Endothelial cell of umbilical vein (primary cell): ENCODE measurements at regions of chr12 and their contacts with region 1.

Region 1: DNA sequence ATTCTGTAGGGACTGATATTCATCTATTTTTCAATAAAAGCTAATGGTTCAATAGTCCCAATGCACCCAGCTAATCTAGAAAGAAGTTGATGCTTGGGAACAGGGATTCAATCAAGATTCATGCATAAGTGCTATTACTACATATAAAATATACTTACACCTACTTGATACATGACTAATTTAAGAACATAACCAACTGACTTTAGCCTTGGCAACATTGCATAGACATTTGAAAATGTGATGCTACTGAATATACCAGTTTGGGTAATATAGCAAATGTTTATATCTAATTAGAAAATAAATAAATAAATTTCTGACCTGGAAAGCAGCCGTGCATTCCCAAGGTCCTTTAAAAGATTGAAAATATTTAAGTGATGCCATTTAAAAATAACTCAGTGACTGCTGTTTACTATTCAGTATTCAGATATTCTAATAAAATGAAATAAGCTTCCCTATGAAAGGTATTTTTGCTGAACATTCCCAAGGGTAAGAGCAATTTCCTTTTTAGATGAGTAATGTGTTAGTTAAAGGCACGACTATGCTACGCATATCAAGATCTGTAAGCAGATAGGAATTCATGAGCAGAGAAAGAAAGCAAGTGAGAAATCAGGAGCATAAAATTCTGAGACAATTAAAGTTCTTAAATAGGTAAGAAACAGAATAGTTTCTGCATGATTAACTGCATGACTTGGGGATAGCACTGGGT is 160.6 kb upstream of the SYT1 start:
- DNase-seq: peak; percentile 89
- H3K4me3 ChIP-seq: no peak overlapping the region
- H3K27ac ChIP-seq: peak overlapping the region; percentile 96
- H3K4me1 ChIP-seq: peaks cover 21% of the 10 kb centered on the region
- H3K27me3 ChIP-seq: no peaks in the 10 kb centered on the region
- CTCF ChIP-seq: no peak
- POLR2A ChIP-seq: no peak

Region 2: DNA sequence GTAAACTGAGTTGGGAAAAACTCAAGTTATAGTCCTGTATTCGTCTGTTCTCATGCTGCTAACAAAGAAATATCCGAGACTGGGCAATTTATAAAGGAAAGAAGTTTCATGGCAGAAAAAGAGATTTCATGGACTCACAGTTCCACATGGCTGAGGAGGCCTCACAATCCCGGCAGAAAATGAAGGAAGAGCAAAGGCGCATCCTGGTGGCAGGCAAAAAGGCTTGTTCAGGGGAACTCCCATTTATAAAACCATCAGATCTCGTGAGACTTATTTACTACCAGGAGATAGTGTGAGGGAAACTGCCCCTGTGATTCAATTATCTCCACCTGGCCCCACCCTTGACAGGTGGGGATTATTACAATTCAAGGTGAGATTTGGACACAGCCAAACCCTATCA is 132.0 kb before region 1 on chr12:
- CTCF ChIA-PET with region 1: no interaction called
- POLR2A ChIA-PET with region 1: no interaction called
- dilution Hi-C with region 1: no loop called
- intact Hi-C with region 1: no loop called
- DNase-seq: no peak
- H3K4me3 ChIP-seq: no peak overlapping the region
- H3K27ac ChIP-seq: no peak overlapping the region
- H3K4me1 ChIP-seq: no peaks in the 10 kb centered on the region
- H3K27me3 ChIP-seq: no peaks in the 10 kb centered on the region
- CTCF ChIP-seq: no peak
- POLR2A ChIP-seq: no peak

Region 3: GRCh38 chr12:78683031-78683430 is 20.9 kb before region 1 on chr12:
- CTCF ChIA-PET with region 1: interaction called, 7 read pairs
- POLR2A ChIA-PET with region 1: no interaction called
- dilution Hi-C with region 1: no loop called
- intact Hi-C with region 1: loop called (anchors 1 kb)
- DNase-seq: peak; percentile 52
- H3K4me3 ChIP-seq: no peak overlapping the region
- H3K27ac ChIP-seq: peak overlapping the region; percentile 5
- H3K4me1 ChIP-seq: peaks cover 20% of the 10 kb centered on the region
- H3K27me3 ChIP-seq: no peaks in the 10 kb centered on the region
- CTCF ChIP-seq: no peak
- POLR2A ChIP-seq: no peak

Region 4: GRCh38 chr12:78759367-78759766 is 55.4 kb after region 1 on chr12:
- CTCF ChIA-PET with region 1: no interaction called
- POLR2A ChIA-PET with region 1: no interaction called
- dilution Hi-C with region 1: no loop called
- intact Hi-C with region 1: loop called (anchors 2 kb)
- DNase-seq: peak; percentile 75
- H3K4me3 ChIP-seq: no peak overlapping the region
- H3K27ac ChIP-seq: peak overlapping the region; percentile 35
- H3K4me1 ChIP-seq: peaks cover 4% of the 10 kb centered on the region
- H3K27me3 ChIP-seq: no peaks in the 10 kb centered on the region
- CTCF ChIP-seq: no peak
- POLR2A ChIP-seq: no peak

Region 5: GRCh38 chr12:78863482-78864402 is 159.8 kb after region 1 on chr12:
- CTCF ChIA-PET with region 1: no interaction called
- POLR2A ChIA-PET with region 1: interaction called, 9 read pairs
- dilution Hi-C with region 1: no loop called
- intact Hi-C with region 1: loop called (anchors 1 kb)
- DNase-seq: peak; percentile 66
- H3K4me3 ChIP-seq: peak overlapping the region; percentile 45 to 91 (median 88)
- H3K27ac ChIP-seq: peak overlapping the region; percentile 69
- H3K4me1 ChIP-seq: peaks cover 9% of the 10 kb centered on the region
- H3K27me3 ChIP-seq: peaks cover 6 to 9% of the 10 kb centered on the region in 2 experiments
- CTCF ChIP-seq: no peak
- POLR2A ChIP-seq: no peak

Region 6: DNA sequence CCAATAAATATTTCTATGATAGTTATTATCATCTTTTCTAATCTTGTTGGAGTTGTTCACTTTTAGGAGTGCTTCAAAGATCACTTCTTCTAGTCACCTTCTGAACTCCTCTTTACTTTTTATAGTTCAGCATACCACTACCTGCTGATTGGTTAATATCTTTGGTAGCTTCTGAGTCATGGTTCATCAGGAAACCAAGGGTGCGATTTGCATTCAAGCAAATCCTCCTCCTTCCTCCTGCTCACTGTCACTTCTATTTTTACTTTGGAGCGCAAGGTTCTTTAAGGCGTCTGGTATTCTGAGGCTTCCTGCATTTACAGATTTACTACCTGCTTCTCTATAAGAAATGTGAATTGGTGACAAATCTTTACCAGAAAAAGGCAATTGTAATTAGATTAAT is 184.6 kb after region 1 on chr12:
- CTCF ChIA-PET with region 1: no interaction called
- POLR2A ChIA-PET with region 1: no interaction called
- dilution Hi-C with region 1: no loop called
- intact Hi-C with region 1: loop called (anchors 2 kb)
- DNase-seq: no peak
- H3K4me3 ChIP-seq: no peak overlapping the region
- H3K27ac ChIP-seq: peak overlapping the region; percentile 11
- H3K4me1 ChIP-seq: peaks cover 29% of the 10 kb centered on the region
- H3K27me3 ChIP-seq: no peaks in the 10 kb centered on the region
- CTCF ChIP-seq: no peak
- POLR2A ChIP-seq: no peak

Region 7: GRCh38 chr12:79183926-79184325 is 480.0 kb after region 1 on chr12:
- CTCF ChIA-PET with region 1: no interaction called
- POLR2A ChIA-PET with region 1: no interaction called
- dilution Hi-C with region 1: no loop called
- intact Hi-C with region 1: loop called (anchors 2 kb)
- DNase-seq: peak; percentile 98
- H3K4me3 ChIP-seq: no peak overlapping the region
- H3K27ac ChIP-seq: peak overlapping the region; percentile 99
- H3K4me1 ChIP-seq: peaks cover 19% of the 10 kb centered on the region
- H3K27me3 ChIP-seq: no peaks in the 10 kb centered on the region
- CTCF ChIP-seq: no peak
- POLR2A ChIP-seq: no peak

Region 8: GRCh38 chr12:79302162-79302814 is 598.3 kb after region 1 on chr12:
- CTCF ChIA-PET with region 1: no interaction called
- POLR2A ChIA-PET with region 1: no interaction called
- dilution Hi-C with region 1: no loop called
- intact Hi-C with region 1: loop called (anchors 1 kb)
- DNase-seq: peak; percentile 95
- H3K4me3 ChIP-seq: no peak overlapping the region
- H3K27ac ChIP-seq: peak overlapping the region; percentile 87
- H3K4me1 ChIP-seq: peaks cover 32% of the 10 kb centered on the region
- H3K27me3 ChIP-seq: no peaks in the 10 kb centered on the region
- CTCF ChIP-seq: no peak
- POLR2A ChIP-seq: peak; percentile 86